Activated T-helper 1 cell treated with anti-CD3 and anti-CD28 coated beads, Interleukin-12 subunit alpha, Interleukin-12 subunit beta, Interleukin-2, Interleukin-4 antibody, amounts not matched to agents 30 ng/mL and 10 ng/mL and 1 ng/mL, durations not matched to agents 14 hours and 24 hours and 36 hours (primary cell): ENCODE measurements at regions of chr6 and their contacts with region 1.

Region 1: DNA sequence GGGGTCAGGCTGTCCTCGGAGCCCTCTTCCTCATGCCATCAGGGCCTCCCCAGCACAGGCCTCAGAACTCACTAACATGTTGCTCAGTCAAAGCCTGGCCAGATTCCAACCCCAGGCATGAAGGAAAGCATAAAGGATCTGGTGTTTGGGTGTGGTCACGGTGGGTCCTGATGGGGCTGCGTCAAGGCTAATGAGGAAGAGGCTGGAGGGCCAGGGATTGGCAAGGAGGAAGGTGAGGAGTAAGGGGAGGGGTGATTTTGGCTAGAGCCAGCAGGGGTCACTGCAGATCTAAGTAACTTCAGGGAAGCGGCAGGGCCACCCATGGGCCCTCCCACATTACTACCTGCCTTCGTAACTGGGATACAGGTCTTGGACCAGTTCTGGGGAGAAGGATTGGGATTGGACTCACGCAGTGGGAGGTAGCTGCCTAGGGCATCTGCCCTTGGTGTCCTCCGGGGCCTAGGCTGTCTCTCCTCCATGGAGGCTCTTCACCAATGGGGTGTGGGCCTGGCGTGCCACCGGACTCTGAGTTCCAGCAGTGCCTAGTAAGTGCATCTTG is 36.2 kb upstream of the MRPS18A start:
- DNase-seq: peak; percentile 50
- H3K4me3 Mint-ChIP-seq: no peak overlapping the region
- H3K27ac Mint-ChIP-seq: no peak overlapping the region
- H3K4me1 Mint-ChIP-seq: peaks cover 32% of the 10 kb centered on the region
- H3K27me3 Mint-ChIP-seq: peaks cover 6% of the 10 kb centered on the region

Region 2: DNA sequence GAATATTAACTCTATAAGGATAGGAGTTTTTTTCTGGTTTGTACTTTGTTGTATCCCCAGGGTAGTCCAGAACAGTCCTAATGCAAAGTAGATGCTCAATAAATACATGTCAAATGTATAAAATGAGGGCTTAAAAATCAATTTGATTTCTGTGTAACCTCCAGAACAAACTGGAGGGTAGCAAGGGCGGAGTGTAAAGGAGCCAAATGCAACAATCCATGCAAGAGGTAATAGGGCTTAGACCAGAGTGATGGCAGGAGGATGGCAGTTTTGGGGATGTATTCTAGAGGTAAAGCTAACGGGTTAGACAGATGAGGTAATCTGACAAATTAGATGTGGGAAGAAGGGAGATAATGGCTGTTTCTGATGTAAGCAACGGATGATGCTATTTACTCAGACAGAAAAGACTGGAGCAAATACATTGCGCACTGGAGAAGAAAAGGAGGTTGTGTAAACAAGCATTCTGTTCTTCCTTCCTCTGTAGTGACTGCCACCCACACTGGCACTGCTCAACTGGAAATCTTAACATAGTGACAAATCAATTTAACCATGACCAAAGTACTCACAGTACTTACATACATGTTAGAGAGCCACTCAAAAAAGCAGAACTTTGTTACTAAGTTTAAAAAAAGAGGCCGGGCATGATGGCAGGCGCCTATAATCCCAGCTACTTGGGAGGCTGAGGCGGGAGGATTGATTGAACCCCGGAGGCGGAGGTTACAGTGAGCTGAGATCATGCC is 356.4 kb before region 1 on chr6:
- intact Hi-C with region 1: no loop called
- DNase-seq: no peak
- H3K4me3 Mint-ChIP-seq: peak overlapping the region; percentile 67
- H3K27ac Mint-ChIP-seq: peak overlapping the region; percentile 16
- H3K4me1 Mint-ChIP-seq: peaks cover 28% of the 10 kb centered on the region
- H3K27me3 Mint-ChIP-seq: no peaks in the 10 kb centered on the region

Region 3: GRCh38 chr6:43708860-43709653 is 14.8 kb before region 1 on chr6:
- intact Hi-C with region 1: loop called (anchors 2 kb)
- DNase-seq: no peak
- H3K4me3 Mint-ChIP-seq: no peak overlapping the region
- H3K27ac Mint-ChIP-seq: peak overlapping the region; percentile 50
- H3K4me1 Mint-ChIP-seq: peaks cover 30% of the 10 kb centered on the region
- H3K27me3 Mint-ChIP-seq: peaks cover 16% of the 10 kb centered on the region

Region 4: GRCh38 chr6:43774776-43775534 is 51.1 kb after region 1 on chr6:
- intact Hi-C with region 1: loop called (anchors 1 kb)
- DNase-seq: peak; percentile 57
- H3K4me3 Mint-ChIP-seq: peak overlapping the region; percentile 56
- H3K27ac Mint-ChIP-seq: peak overlapping the region; percentile 27
- H3K4me1 Mint-ChIP-seq: peaks cover 39% of the 10 kb centered on the region
- H3K27me3 Mint-ChIP-seq: peaks cover 2% of the 10 kb centered on the region

Region 5: DNA sequence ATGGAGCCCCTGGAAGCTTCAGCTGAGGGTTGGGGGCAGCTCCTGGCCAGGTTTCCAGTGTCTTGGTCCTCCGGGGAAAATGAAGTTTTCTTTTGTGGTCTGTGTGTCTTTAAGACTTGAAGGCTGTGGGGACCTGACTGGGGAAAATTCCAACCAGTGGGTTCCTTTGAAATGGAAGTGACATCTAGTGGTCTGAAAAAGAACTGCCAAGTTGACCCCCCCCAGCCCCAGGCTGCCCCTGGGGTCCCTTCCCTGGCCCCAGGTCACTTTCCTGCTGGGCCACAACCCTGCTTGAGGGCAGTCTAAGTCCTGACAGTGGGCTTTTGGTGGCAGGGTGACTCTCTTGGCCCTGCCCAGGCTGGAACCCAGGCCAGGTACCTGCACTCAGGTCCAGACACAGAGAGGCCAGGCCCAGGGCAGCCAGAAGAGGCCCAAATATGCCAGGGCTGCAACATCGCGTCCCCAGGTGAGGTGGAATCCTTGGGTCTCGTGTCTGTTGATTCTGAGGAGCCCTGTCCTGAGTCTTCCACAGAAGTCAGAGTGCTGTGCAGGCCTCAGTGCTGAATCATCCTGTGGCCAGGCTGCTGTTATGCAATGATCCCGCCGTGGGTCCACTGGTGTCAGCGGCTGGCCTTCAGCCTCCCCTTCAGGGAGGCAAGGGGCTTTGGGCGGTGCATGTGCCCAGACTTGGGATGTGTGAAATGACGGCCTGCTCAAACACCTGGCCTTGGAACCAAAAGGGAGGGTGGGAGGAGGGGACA is 114.6 kb after region 1 on chr6:
- intact Hi-C with region 1: loop called (anchors 1 kb)
- DNase-seq: no peak
- H3K4me3 Mint-ChIP-seq: no peak overlapping the region
- H3K27ac Mint-ChIP-seq: no peak overlapping the region
- H3K4me1 Mint-ChIP-seq: no peaks in the 10 kb centered on the region
- H3K27me3 Mint-ChIP-seq: peaks cover 3% of the 10 kb centered on the region

Region 6: DNA sequence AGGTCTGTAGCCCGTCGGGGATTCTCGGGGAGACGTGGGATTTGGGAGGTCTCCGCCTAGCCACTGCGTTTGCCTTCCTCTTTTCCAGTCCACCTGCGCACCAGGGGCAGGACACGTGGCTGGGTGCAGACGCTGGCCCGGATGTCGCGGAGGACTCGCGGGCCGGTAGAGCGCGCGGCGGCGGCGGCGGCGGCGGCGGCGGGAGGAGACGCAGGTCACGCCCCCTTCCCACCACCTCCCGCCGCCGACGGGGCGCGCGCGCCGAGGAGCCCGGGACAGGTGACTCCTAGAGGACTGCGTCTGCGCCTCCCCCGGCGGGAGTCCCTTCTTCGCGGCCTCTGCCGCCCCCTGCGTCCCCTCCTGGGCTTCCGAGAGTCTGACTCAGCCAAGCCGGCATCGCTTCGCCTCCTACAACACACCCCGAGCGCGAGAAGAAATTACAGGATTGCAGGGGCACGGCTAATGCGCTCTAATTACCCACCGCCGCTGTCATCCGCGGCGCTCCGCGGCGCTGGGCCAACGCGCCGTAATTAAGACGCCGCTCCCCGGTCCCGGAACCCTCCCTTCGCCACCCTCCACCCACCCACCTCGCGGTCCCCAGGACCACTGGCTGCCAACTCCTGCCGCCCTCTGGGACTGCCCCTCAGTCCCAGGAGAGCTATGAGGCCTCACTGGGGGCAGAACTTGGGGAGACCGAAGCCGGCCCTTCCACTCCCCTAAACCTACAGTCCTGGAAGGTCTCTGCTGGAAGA is 279.0 kb after region 1 on chr6:
- intact Hi-C with region 1: loop called (anchors 5 kb)
- DNase-seq: peak; percentile 48
- H3K4me3 Mint-ChIP-seq: peak overlapping the region; percentile 63
- H3K27ac Mint-ChIP-seq: no peak overlapping the region
- H3K4me1 Mint-ChIP-seq: peaks cover 6% of the 10 kb centered on the region
- H3K27me3 Mint-ChIP-seq: peaks cover 37% of the 10 kb centered on the region